ENCODE measurements at regions of chr13 and their contacts with region 1.

Region 1: DNA sequence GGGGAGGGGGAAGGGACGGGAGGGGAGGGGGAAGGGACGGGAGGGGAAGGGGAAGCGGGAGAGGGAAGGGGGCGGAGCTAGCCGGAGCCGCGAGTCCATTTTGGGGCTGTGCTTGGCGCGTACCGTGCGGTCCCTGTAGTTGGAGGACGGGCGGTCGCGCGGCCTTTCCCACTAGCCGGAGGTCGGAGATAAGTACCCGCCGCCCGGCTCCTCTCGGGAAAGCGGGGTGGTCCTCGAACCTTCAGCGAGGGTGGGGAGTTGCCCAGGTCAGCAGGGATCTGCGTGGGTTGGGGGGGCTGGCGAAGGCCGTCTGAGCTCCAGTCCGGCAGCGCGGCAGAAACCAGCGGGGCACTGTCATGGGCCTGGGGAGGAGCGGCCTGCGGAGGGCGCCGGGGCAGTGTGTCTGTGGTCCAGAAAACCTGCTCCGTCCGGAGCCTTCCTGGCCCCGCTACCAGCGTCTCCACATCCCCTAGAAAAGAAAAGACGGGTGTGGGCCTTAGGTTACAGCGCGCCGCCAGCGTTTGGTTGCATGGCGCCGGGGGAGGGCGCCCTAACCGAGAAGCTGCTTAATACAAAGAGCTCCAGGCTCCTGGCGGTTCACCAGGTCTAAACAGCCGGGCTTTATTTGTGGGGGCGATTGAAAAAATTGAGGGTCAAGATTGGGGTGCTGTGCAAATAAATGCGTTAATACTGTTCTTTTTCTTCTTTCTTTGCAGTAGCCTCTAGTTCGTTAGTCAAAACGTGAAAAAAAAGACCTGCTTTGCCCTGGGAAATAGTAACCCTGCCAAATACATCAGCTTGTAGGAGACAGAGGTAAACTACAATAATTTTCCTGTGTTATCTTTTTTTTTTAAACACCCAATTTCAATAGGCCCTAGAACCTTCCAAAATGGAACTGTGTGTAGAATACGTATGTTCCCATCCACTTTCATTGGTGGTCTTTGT is at the start of gene TRIM13:
- DNase-seq: peak; percentile 90
- H3K4me3 Mint-ChIP-seq: peak within 1 kb of the TSS; percentile 79
- H3K27ac Mint-ChIP-seq: peak within 1 kb of the TSS; percentile 85
- H3K4me1 Mint-ChIP-seq: peaks cover 33% of the 10 kb centered on the region
- H3K27me3 Mint-ChIP-seq: no peaks in the 10 kb centered on the region
- total RNA-seq, gene TRIM13: 15.5 to 15.8 TPM

Region 2: GRCh38 chr13:50011461-50011860 is 14.2 kb after region 1 on chr13:
- CTCF ChIA-PET with region 1: interaction called, 11 read pairs
- intact Hi-C with region 1: no loop called
- DNase-seq: no peak
- H3K4me3 Mint-ChIP-seq: no peak overlapping the region
- H3K27ac Mint-ChIP-seq: no peak overlapping the region
- H3K4me1 Mint-ChIP-seq: peaks cover 17% of the 10 kb centered on the region
- H3K27me3 Mint-ChIP-seq: no peaks in the 10 kb centered on the region

Region 3: GRCh38 chr13:50033725-50034124 is 36.5 kb after region 1 on chr13:
- CTCF ChIA-PET with region 1: no interaction called
- intact Hi-C with region 1: no loop called
- DNase-seq: no peak
- H3K4me3 Mint-ChIP-seq: no peak overlapping the region
- H3K27ac Mint-ChIP-seq: no peak overlapping the region
- H3K4me1 Mint-ChIP-seq: peaks cover 2% of the 10 kb centered on the region
- H3K27me3 Mint-ChIP-seq: no peaks in the 10 kb centered on the region

Region 4: GRCh38 chr13:50130123-50130946 is 133.1 kb after region 1 on chr13:
- CTCF ChIA-PET with region 1: no interaction called
- intact Hi-C with region 1: loop called (anchors 1 kb)
- DNase-seq: peak; percentile 24
- H3K4me3 Mint-ChIP-seq: peak overlapping the region; percentile 66
- H3K27ac Mint-ChIP-seq: peak overlapping the region; percentile 50
- H3K4me1 Mint-ChIP-seq: peaks cover 62% of the 10 kb centered on the region
- H3K27me3 Mint-ChIP-seq: peaks cover 60% of the 10 kb centered on the region

Region 5: GRCh38 chr13:50244713-50245574 is 247.7 kb after region 1 on chr13:
- CTCF ChIA-PET with region 1: no interaction called
- intact Hi-C with region 1: loop called (anchors 2 kb)
- DNase-seq: peak; percentile 84
- H3K4me3 Mint-ChIP-seq: no peak overlapping the region
- H3K27ac Mint-ChIP-seq: peak overlapping the region; percentile 72
- H3K4me1 Mint-ChIP-seq: peaks cover 30% of the 10 kb centered on the region
- H3K27me3 Mint-ChIP-seq: peaks cover 13% of the 10 kb centered on the region

Region 6: DNA sequence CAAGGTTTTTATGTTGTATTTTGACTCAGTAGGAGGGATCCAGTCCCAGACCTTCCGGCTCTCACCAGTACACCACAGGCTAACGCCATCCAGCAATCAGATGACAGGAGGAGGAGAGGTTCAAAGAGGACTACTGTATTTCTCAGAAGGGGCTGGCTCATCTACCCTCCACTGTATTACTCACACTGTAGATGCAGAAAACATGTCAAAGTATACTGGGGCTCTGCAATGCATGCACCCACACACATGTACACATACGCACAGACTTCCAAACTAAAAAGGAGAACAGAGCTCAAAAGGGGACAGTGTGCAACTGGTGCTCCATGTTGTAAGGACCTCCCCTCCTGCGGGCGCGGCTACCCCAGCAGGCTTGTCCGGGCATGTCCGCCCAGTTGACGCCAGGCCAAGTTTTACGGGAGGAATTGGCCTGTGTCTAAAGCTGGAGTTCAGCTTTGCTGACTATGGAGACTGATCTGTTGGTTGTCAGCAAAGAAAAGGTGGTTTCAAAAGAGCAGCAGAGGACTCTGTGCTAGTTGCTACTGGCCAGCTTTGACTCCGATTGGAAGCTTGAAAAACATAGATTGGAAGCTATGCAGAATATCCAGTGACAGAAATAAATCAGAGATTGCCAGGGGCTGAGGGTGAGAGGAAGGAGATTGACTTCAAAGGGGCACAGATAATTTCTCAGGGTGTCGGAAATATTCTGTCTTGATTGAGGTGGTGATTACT is 532.1 kb after region 1 on chr13:
- CTCF ChIA-PET with region 1: interaction called, 6 read pairs
- intact Hi-C with region 1: loop called (anchors 1 kb)
- DNase-seq: peak; percentile 49
- H3K4me3 Mint-ChIP-seq: no peak overlapping the region
- H3K27ac Mint-ChIP-seq: no peak overlapping the region
- H3K4me1 Mint-ChIP-seq: peaks cover 18% of the 10 kb centered on the region
- H3K27me3 Mint-ChIP-seq: peaks cover 13% of the 10 kb centered on the region